ENCODE measurements at regions of chr11 and their contacts with region 1.

Region 1: DNA sequence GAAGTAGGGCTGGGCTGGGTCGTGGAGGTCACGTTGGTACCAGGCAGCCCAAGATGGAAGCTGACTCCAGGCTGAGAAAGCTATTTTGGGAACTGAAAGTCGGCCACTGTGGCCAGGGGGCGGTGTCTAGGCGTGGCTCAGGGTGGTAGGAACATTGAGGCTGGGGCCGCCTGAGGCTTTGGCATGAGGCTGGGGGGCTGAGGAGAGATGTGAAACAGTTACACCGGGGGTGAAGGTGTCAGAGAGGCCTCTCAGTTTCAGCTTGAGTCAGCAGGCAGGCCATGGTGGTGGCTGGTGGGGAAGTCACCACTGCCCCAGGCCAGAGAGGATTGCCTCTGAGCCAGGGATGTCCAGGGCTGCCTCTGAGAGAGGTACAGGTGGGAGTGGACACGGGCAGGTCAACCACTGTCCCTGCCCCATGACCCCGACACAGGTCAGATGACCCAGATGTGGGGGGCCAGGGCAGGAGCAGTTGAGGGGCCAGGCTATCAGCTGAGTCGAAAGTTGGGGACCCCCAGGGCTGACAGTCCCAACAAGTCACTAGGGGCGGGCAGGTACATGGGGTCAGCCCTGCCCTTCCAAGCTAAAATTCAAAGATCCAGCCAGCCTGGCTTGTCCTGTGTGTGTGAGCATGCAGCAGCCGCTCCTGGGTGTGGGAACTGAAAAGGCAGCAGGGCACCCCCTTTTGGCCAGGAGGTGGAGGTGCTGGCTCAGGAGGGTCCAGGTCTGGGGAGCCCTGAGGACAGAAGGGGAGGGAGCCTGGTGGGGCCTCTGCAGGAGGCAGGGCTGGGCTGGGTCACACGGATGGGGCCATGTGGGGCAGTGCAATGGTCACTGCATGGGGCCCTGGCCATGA is 7.2 kb downstream of the KCNK7 start:
- DNase-seq: peak; percentile 93
- ATAC-seq: peak; percentile 85
- H3K4me3 Mint-ChIP-seq: peak overlapping the region; percentile 37
- H3K27ac Mint-ChIP-seq: peak overlapping the region; percentile 96
- H3K4me1 Mint-ChIP-seq: peaks cover 49% of the 10 kb centered on the region
- H3K27me3 Mint-ChIP-seq: no peaks in the 10 kb centered on the region

Region 2: GRCh38 chr11:65551572-65552398 is 36.6 kb before region 1 on chr11:
- CTCF ChIA-PET with region 1: interaction called, 209 read pairs
- DNase-seq: peak; percentile 75
- ATAC-seq: peak; percentile 56
- H3K4me3 Mint-ChIP-seq: no peak overlapping the region
- H3K27ac Mint-ChIP-seq: peak overlapping the region; percentile 58
- H3K4me1 Mint-ChIP-seq: peaks cover 68% of the 10 kb centered on the region
- H3K27me3 Mint-ChIP-seq: no peaks in the 10 kb centered on the region

Region 3: GRCh38 chr11:65569973-65570918 is 18.2 kb before region 1 on chr11 and contains the start of gene ZNRD2:
- CTCF ChIA-PET with region 1: interaction called, 172 read pairs
- DNase-seq: peak; percentile 100
- ATAC-seq: peak; percentile 74
- H3K4me3 Mint-ChIP-seq: peak within 1 kb of the TSS; percentile 100
- H3K27ac Mint-ChIP-seq: peak within 1 kb of the TSS; percentile 98
- H3K4me1 Mint-ChIP-seq: peaks cover 66% of the 10 kb centered on the region
- H3K27me3 Mint-ChIP-seq: no peaks in the 10 kb centered on the region
- total RNA-seq, gene ZNRD2: 42.1 to 45.5 TPM

Region 4: DNA sequence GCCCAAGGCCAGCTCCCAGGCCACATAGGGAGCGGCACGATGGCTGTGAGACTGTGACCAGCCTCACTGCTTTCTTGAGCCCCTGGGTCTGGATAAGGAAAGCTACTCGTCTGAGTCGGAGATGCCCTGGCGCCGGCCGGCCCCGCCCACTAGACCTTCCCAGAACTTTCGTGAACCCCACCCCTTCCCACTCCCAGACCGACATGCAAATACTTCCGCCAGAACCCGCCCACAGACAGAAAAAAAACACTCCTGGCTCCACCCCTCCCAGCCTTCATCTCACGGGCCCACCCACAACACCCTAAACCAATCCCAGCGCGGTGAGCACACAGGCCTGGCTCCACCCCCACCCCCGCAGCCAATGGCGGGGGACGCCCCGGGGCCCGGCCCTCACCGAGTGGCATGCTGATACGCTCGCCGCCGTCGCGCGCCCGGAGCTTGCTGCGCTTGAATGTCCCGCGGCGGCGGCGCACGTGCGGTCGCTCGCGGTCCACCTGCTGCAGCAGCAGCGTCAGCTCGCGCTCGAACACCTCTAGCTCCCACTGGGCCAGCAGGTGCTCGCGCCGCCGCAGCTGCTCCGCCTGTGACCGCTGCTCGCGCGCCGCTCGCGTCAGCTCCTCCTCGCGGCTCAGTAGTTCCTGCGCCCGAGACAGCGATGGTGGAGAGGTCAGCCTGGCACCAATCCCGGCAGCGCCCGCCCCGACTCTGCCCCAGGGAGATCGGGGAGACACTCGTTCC is 18.6 kb after region 1 on chr11:
- CTCF ChIA-PET with region 1: interaction called, 34 read pairs
- DNase-seq: no peak
- ATAC-seq: no peak
- H3K4me3 Mint-ChIP-seq: no peak overlapping the region
- H3K27ac Mint-ChIP-seq: no peak overlapping the region
- H3K4me1 Mint-ChIP-seq: peaks cover 27% of the 10 kb centered on the region
- H3K27me3 Mint-ChIP-seq: no peaks in the 10 kb centered on the region

Measured in activated CD8-positive, alpha-beta memory T cell treated with anti-CD3 and anti-CD28 coated beads, Interleukin-2, amount 10 ng/mL, durations not matched to agents 7 days and 5 days (primary cell).